Lower lobe of right lung (tissue), 2 donors: ENCODE measurements at regions of chr6 and their contacts with region 1.

Region 1: DNA sequence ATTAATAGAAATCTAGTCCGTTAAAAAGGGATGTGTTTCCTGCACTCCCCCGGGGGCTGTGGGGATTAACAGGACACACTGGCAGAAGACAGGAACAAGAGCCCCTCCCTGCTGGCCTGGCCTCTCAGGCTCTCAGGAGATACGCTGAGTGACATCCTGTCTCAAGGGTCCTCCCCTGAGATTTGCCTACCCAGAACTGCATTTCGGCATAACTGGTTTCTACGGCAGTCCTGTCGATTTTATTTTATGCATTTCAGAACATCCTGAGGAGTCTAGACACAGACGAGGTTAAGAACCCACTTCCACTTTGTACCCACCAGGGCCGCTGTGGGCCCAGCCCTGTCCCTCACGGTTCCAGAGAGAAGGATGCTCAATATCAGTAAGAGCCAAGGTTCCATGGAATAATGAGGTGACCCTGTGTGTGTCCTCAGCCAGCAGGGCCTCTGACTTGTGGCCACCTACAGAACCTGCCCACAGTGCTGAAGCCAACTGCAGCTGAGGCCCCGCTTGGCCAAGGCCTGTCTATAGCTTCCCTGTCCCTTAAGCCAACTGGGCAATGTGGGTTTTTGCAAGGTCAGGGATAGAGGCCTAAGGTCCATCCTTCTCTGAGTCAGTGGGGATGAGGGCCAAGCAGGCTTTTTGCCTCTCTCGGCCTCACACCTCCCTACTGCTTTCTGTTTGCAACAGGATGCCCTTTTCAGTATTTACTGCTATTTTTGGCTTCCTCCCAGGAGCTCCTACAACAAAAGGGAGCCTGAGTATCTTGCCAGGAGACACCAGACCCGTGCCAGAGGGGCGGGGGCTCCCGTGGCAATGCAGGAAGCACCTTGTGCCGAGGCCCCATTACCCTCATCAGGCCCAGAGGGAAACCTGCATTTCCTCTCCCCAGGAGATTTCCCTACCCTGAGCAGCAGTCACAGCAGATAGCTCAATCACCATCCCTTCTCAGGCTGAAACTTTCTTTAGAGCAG is 14.7 kb downstream of the UQCC2 start:
- DNase-seq: peak; percentile 59
- ATAC-seq: peak; percentile 5 to 11
- H3K4me3 ChIP-seq: no peak overlapping the region
- H3K27ac ChIP-seq: peak overlapping the region; percentile 25
- H3K4me1 ChIP-seq: peaks cover 67% of the 10 kb centered on the region
- H3K27me3 ChIP-seq: no peaks in the 10 kb centered on the region
- CTCF ChIP-seq: no peak

Region 2: GRCh38 chr6:33535104-33535603 is 161.7 kb before region 1 on chr6:
- intact Hi-C with region 1: no loop called
- DNase-seq: no peak
- ATAC-seq: no peak
- H3K4me3 ChIP-seq: no peak overlapping the region
- H3K27ac ChIP-seq: no peak overlapping the region
- H3K4me1 ChIP-seq: no peaks in the 10 kb centered on the region
- H3K27me3 ChIP-seq: no peaks in the 10 kb centered on the region
- CTCF ChIP-seq: peak; percentile 9

Region 3: GRCh38 chr6:33579828-33580714 is 116.8 kb before region 1 on chr6 and contains the start of gene BAK1:
- intact Hi-C with region 1: loop called (anchors 10 kb)
- DNase-seq: peak; percentile 95
- ATAC-seq: peak; percentile 96
- H3K4me3 ChIP-seq: peak within 1 kb of the TSS; percentile 94
- H3K27ac ChIP-seq: peak within 1 kb of the TSS; percentile 89
- H3K4me1 ChIP-seq: peaks cover 37% of the 10 kb centered on the region
- H3K27me3 ChIP-seq: no peaks in the 10 kb centered on the region
- CTCF ChIP-seq: peak; percentile 65
- total RNA-seq, gene BAK1: 22.3 TPM

Region 4: GRCh38 chr6:33761922-33762629 is 65.2 kb after region 1 on chr6:
- intact Hi-C with region 1: no loop called
- DNase-seq: peak; percentile 63
- ATAC-seq: peak; percentile 76 to 85
- H3K4me3 ChIP-seq: no peak overlapping the region
- H3K27ac ChIP-seq: peak overlapping the region; percentile 41
- H3K4me1 ChIP-seq: peaks cover 6% of the 10 kb centered on the region
- H3K27me3 ChIP-seq: no peaks in the 10 kb centered on the region
- CTCF ChIP-seq: peak; percentile 59

Region 5: GRCh38 chr6:34074064-34074742 is 377.4 kb after region 1 on chr6:
- intact Hi-C with region 1: no loop called
- DNase-seq: no peak
- ATAC-seq: no peak
- H3K4me3 ChIP-seq: no peak overlapping the region
- H3K27ac ChIP-seq: no peak overlapping the region
- H3K4me1 ChIP-seq: no peaks in the 10 kb centered on the region
- H3K27me3 ChIP-seq: no peaks in the 10 kb centered on the region
- CTCF ChIP-seq: no peak